ENCODE measurements at regions of chr20 and their contacts with region 1.

Region 1: DNA sequence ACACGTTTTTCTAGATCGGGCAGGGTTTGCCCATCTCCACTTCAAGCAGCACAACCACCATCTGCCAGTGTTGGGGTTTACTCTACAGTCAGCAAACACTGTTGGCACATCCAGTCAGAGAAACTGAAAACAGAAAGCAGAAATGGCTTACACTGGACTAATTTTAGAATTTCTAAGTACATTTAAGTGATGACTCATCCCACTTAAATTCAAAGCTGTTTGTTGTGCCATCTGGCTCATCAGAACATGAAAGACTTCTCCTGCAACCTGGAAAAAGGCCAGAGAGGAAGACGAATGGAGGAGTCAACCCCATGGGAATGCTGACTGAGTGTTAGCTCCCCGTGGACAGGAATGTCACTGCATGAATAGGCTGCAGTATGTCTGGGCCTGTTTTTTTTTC is 21.8 kb downstream of the FAM209B start:
- DNase-seq: no peak
- H3K4me3 ChIP-seq: no peak overlapping the region
- H3K27ac ChIP-seq: no peak overlapping the region
- H3K4me1 ChIP-seq: no peaks in the 10 kb centered on the region
- H3K27me3 ChIP-seq: peaks cover 45% of the 10 kb centered on the region
- CTCF ChIP-seq: no peak
- EP300 ChIP-seq: 0 out of 4 replicates have a peak, but pooled peaks of 1 of the 2 experiments have one; percentile 31
- RAD21 ChIP-seq: no peak

Region 2: GRCh38 chr20:55649254-55649653 is 905.6 kb before region 1 on chr20:
- CTCF ChIA-PET with region 1: no interaction called
- POLR2A ChIA-PET with region 1: no interaction called
- DNase-seq: no peak
- H3K4me3 ChIP-seq: no peak overlapping the region
- H3K27ac ChIP-seq: no peak overlapping the region
- H3K4me1 ChIP-seq: no peaks in the 10 kb centered on the region
- H3K27me3 ChIP-seq: no peaks in the 10 kb centered on the region
- CTCF ChIP-seq: no peak
- EP300 ChIP-seq: no peak
- RAD21 ChIP-seq: no peak

Region 3: GRCh38 chr20:56566271-56566981 is 11.6 kb after region 1 on chr20:
- CTCF ChIA-PET with region 1: interaction called, 23 read pairs
- POLR2A ChIA-PET with region 1: no interaction called
- DNase-seq: no peak
- H3K4me3 ChIP-seq: no peak overlapping the region
- H3K27ac ChIP-seq: no peak overlapping the region
- H3K4me1 ChIP-seq: no peaks in the 10 kb centered on the region
- H3K27me3 ChIP-seq: peaks cover 18% of the 10 kb centered on the region; the same call in 1 of the 2 replicates
- CTCF ChIP-seq: no peak
- EP300 ChIP-seq: no peak
- RAD21 ChIP-seq: no peak

Region 4: GRCh38 chr20:56736285-56736857 is 181.5 kb after region 1 on chr20:
- CTCF ChIA-PET with region 1: no interaction called
- POLR2A ChIA-PET with region 1: no interaction called
- DNase-seq: no peak
- H3K4me3 ChIP-seq: no peak overlapping the region
- H3K27ac ChIP-seq: no peak overlapping the region
- H3K4me1 ChIP-seq: no peaks in the 10 kb centered on the region
- H3K27me3 ChIP-seq: peaks cover 29% of the 10 kb centered on the region
- CTCF ChIP-seq: no peak
- EP300 ChIP-seq: no peak
- RAD21 ChIP-seq: no peak

Region 5: GRCh38 chr20:56974499-56975236 is 419.8 kb after region 1 on chr20:
- CTCF ChIA-PET with region 1: interaction called, 19 read pairs
- POLR2A ChIA-PET with region 1: no interaction called
- DNase-seq: no peak
- H3K4me3 ChIP-seq: no peak overlapping the region; a peak in 1 of 4 replicates
- H3K27ac ChIP-seq: no peak overlapping the region
- H3K4me1 ChIP-seq: no peaks in the 10 kb centered on the region
- H3K27me3 ChIP-seq: peaks cover 68% of the 10 kb centered on the region
- CTCF ChIP-seq: peak; percentile 64
- EP300 ChIP-seq: no peak
- RAD21 ChIP-seq: peak; percentile 52

Region 6: DNA sequence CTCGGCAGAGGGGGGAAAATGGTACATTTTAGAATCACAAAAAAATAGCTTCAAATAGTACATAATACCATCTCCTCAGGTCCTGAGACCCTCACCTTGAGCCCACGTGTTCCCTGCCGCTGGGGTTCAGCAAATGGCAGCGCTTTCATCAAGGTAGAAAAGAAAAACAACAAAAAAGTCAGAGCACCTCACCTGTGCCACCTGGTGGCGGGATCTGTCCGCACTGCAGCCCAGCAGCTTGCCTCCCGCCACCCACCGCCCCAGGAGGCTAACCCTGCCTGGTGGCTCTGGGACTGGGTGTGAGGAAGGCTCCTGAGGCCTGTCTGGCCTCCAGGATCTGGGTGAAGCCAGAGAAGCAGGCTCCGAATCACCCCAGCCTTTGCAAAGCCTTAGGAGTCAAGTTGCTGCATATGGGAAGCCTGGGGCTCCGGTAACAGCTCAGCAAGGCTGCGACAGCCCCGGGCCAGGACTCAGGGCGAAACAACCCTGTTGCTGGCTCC is 440.8 kb after region 1 on chr20:
- CTCF ChIA-PET with region 1: interaction called, 47 read pairs
- POLR2A ChIA-PET with region 1: no interaction called
- DNase-seq: peak; percentile 59
- H3K4me3 ChIP-seq: peak overlapping the region in 1 of 2 experiments; percentile 12; a peak in 1 of 4 replicates
- H3K27ac ChIP-seq: no peak overlapping the region
- H3K4me1 ChIP-seq: no peaks in the 10 kb centered on the region
- H3K27me3 ChIP-seq: peaks cover 18% of the 10 kb centered on the region; the same call in 1 of the 2 replicates
- CTCF ChIP-seq: peak; percentile 59
- EP300 ChIP-seq: no peak
- RAD21 ChIP-seq: peak; percentile 30

Region 7: DNA sequence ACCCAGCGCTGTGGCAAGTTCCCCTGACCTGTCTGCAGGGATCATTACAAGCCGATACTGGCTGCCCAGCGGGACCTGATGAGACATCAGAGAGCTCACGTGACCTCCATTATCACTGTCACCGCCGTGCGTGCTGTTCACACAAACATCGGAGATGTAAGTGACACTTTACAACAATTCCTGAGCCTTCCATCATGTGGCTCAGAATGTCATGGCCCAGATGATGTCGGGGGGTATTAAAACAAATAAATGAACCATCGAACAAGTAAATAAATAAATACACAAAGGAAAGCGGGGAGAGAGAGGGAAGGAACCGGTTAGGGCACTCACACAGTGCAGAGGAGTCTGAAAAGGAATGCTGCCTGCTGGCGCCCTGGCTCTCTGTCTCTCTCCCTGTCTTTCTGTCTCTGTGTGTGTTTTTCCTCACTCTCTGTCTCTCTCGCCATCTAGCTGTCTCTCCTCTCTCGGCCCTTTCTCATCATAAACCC is 516.5 kb after region 1 on chr20:
- CTCF ChIA-PET with region 1: interaction called, 11 read pairs
- POLR2A ChIA-PET with region 1: no interaction called
- DNase-seq: no peak
- H3K4me3 ChIP-seq: peak overlapping the region in 1 of 2 experiments; percentile 4; a peak in 1 of 4 replicates
- H3K27ac ChIP-seq: no peak overlapping the region
- H3K4me1 ChIP-seq: peaks cover 0 to 2% of the 10 kb centered on the region in 2 experiments; a peak in 1 of 4 replicates
- H3K27me3 ChIP-seq: peaks cover 11% of the 10 kb centered on the region
- CTCF ChIP-seq: no peak
- EP300 ChIP-seq: no peak
- RAD21 ChIP-seq: no peak

Measured in SK-N-SH (cell line).